ENCODE measurements at regions of chr10 and their contacts with region 1.

Region 1: GRCh38 chr10:105756386-105756785 is 1115.3 kb downstream of the SORCS3 start:
- DNase-seq: no peak
- ATAC-seq: peak; percentile 58

Region 2: GRCh38 chr10:105605918-105606317 is 150.5 kb before region 1 on chr10:
- intact Hi-C with region 1: loop called (anchors 10 kb)
- DNase-seq: no peak
- ATAC-seq: peak; percentile 74

Region 3: GRCh38 chr10:105742184-105742583 is 14.2 kb before region 1 on chr10:
- intact Hi-C with region 1: loop called (anchors 2 kb)
- DNase-seq: no peak
- ATAC-seq: peak; percentile 87

Region 4: DNA sequence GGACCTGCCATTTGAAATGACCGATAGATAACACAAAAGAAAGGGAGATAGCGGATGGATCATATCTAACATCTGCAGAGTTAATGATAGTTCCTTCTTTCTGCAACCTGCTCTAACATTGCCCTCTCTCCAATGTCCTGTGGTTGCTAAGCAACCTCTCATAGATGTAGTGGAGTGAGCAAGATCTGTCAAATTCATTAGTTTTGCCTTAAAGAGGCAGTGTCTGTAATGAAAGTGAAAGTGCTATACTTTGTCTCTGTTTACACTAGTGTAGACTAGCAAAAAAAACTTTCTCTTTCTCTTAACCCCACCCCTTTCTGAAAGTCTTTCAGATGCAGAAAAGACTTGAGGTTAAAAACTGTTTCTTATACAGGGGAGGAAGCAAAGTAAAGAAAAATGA is 81.6 kb after region 1 on chr10:
- intact Hi-C with region 1: no loop called
- DNase-seq: no peak
- ATAC-seq: peak; percentile 57

Region 5: DNA sequence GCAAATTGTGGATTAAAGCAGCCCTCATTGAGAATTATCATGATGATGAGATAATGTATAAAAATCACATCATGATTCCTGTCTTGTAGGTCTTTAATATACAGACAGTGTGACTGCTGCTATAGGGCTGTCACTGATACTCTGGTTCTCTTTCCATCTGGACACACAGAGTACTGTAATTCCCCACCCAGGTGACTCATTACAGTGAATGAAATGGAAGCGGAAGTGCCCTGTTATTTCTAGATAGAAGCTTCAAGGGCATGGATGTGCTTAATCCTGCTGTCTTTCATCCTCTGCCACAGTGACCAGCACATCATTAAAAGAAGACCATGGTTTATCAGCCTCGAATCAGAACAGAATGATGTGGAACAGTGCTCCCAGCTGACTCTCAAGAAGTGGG is 118.7 kb after region 1 on chr10:
- intact Hi-C with region 1: no loop called
- DNase-seq: no peak
- ATAC-seq: no peak

Region 6: DNA sequence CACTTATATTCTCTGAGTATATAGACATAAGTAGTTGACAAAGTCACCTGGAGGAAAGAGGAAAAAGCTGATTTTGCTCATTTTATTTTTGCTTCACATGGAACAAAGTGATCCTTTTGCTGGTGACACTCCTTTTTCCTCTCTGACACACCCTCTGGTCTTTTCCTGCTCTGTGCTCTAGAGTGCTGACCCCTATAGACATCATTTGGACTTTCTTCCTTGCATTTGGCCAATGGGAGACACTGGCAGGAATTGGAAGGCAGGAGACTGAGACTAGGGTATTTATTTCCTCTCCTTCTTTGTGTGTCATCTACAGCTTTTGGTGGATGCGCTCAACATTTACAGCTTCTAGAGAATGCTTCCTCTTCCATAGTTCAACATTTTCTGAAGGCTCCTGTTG is 330.0 kb after region 1 on chr10:
- intact Hi-C with region 1: no loop called
- DNase-seq: no peak
- ATAC-seq: no peak